ENCODE measurements at regions of chr11 and their contacts with region 1.

Region 1: DNA sequence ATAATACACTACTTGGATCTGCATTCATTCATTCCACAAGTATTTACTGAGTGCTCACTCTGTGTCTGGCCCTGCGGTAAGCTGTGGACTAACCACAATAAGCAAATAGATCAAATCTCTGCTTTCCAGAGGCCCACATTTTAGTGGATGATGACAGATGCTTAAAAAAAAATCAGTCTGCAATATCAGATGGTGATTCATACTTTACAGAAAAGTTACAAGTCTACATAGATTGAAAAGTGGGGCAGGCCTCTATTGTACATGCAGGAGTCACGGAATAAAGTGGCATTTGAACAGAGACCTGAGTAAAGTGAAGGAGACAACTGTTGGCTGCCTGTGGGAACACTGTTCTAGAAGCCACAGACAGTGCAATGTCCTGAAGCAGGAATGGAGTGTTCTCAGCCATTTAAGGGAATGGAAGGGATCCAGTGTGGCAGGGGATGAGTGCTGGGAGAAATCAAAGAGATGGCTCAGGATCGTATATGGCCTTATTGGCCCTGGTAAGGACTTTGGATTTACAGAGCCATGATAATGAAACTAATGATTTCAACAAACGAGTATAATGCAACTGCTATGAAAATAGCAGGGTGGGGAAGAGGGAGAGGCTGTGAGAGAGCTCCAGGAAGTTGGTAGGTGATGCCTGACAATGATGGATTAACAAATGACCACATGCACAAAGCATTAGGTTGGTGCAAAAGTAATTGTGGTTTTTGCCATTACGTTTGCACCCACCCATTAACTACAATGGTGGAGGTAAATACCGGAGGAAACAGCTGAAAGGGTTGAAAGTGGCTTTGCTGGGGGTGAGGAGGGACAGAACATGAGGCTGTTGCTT is 31.1 kb downstream of the TMEM45B start:
- DNase-seq: peak; percentile 99
- ATAC-seq: peak; percentile 97
- H3K4me3 ChIP-seq: peak overlapping the region; percentile 44
- H3K27ac ChIP-seq: peak overlapping the region; percentile 94
- H3K4me1 ChIP-seq: peaks cover 38% of the 10 kb centered on the region
- H3K27me3 ChIP-seq: no peaks in the 10 kb centered on the region
- CTCF ChIP-seq: no peak

Region 2: GRCh38 chr11:129639300-129639699 is 207.4 kb before region 1 on chr11:
- CTCF ChIA-PET with region 1: no interaction called
- POLR2A ChIA-PET with region 1: interaction called, 4 read pairs
- intact Hi-C with region 1: loop called (anchors 10 kb)
- DNase-seq: peak; percentile 99
- ATAC-seq: peak; percentile 65
- H3K4me3 ChIP-seq: 0 out of 2 replicates have a peak overlapping the region, but pooled peaks have one; percentile 13
- H3K27ac ChIP-seq: peak overlapping the region; percentile 92
- H3K4me1 ChIP-seq: peaks cover 68% of the 10 kb centered on the region
- H3K27me3 ChIP-seq: no peaks in the 10 kb centered on the region
- CTCF ChIP-seq: no peak

Region 3: DNA sequence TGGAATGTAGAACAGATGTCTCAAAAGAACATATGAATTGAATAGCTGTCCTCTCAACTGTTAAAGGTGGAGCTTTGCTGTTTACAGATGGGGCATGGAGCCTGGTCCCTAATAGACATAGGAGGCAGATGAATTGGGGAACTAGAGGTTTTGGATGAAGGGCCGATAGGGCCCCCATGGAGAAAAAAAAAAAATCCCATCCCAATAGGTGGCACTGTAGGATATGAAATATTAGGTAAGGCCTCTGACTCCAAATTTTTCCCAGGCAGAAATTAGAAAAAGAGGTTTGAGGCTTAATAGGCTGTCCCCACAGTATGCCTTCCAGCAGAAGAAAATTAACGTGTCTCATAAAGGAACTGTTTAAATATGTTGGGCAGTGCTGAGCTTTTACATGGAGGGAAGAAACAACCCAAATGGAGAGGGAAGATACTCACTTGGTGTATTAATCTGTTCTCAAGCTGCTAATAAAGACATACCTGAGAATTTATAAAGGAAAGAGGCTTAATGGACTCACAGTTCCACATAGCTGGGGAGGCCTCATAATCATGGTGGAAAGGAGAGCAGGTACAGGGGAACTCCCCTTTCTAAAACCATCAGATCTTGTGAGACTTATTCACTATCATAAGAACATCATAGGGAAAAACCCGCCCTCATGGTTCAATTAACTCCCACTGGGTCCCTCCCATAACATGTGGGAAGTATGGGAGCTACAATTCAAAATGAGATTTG is 61.2 kb before region 1 on chr11:
- CTCF ChIA-PET with region 1: interaction called, 6 read pairs
- POLR2A ChIA-PET with region 1: no interaction called
- intact Hi-C with region 1: loop called (anchors 5 kb)
- DNase-seq: peak; percentile 86
- ATAC-seq: peak; percentile 49
- H3K4me3 ChIP-seq: no peak overlapping the region
- H3K27ac ChIP-seq: peak overlapping the region; percentile 45
- H3K4me1 ChIP-seq: peaks cover 34% of the 10 kb centered on the region
- H3K27me3 ChIP-seq: no peaks in the 10 kb centered on the region
- CTCF ChIP-seq: peak; percentile 90

Region 4: GRCh38 chr11:129815596-129816461 is 30.9 kb before region 1 on chr11 and contains the start of gene TMEM45B:
- CTCF ChIA-PET with region 1: no interaction called
- POLR2A ChIA-PET with region 1: interaction called, 14 read pairs
- intact Hi-C with region 1: loop called (anchors 5 kb)
- DNase-seq: peak; percentile 66
- ATAC-seq: peak; percentile 80
- H3K4me3 ChIP-seq: peak within 1 kb of the TSS; percentile 89
- H3K27ac ChIP-seq: peak within 1 kb of the TSS; percentile 58
- H3K4me1 ChIP-seq: peaks cover 35% of the 10 kb centered on the region
- H3K27me3 ChIP-seq: no peaks in the 10 kb centered on the region
- CTCF ChIP-seq: no peak
- total RNA-seq, gene TMEM45B: 24.0 and 30.4 TPM in 2 replicates

Region 5: GRCh38 chr11:129828301-129828836 is 18.3 kb before region 1 on chr11:
- CTCF ChIA-PET with region 1: no interaction called
- POLR2A ChIA-PET with region 1: no interaction called
- intact Hi-C with region 1: loop called (anchors 1 kb)
- DNase-seq: peak; percentile 99
- ATAC-seq: peak; percentile 65
- H3K4me3 ChIP-seq: peak overlapping the region; percentile 21; the same call in 1 of the 2 replicates
- H3K27ac ChIP-seq: peak overlapping the region; percentile 96
- H3K4me1 ChIP-seq: peaks cover 74% of the 10 kb centered on the region
- H3K27me3 ChIP-seq: no peaks in the 10 kb centered on the region
- CTCF ChIP-seq: peak; percentile 49; the same call in 1 of the 2 replicates

Region 6: GRCh38 chr11:129861702-129862113 is 15.0 kb after region 1 on chr11:
- CTCF ChIA-PET with region 1: no interaction called
- POLR2A ChIA-PET with region 1: no interaction called
- intact Hi-C with region 1: loop called (anchors 1 kb)
- DNase-seq: peak; percentile 100
- ATAC-seq: peak; percentile 95
- H3K4me3 ChIP-seq: peak overlapping the region; percentile 38; the same call in 1 of the 2 replicates
- H3K27ac ChIP-seq: peak overlapping the region; percentile 95
- H3K4me1 ChIP-seq: peaks cover 33% of the 10 kb centered on the region
- H3K27me3 ChIP-seq: no peaks in the 10 kb centered on the region
- CTCF ChIP-seq: no peak